Panc1 (cell line): ENCODE measurements at regions of chrX and their contacts with region 1.

Region 1: DNA sequence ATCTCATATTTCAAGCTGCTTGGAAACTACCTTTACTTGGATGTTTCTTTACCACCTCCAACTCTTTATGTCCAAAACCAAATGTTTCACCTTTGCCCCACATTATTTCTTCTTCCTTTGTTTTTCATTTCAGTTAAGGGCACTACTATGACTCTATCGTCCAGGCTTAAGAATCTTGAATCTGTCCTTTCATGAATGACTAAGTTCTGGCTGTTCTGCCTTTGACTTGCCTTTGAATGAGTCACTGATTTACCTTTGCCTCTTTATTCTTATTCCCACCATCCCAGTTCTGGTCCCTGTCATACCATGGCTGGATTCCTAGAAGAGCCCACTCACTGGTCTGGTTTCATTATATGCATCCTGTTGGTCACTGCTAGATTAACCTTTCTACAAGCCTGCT is 30.6 kb upstream of the PLAC1 start:
- DNase-seq: no peak
- ATAC-seq: no peak
- H3K4me3 ChIP-seq: no peak overlapping the region
- H3K27ac ChIP-seq: no peak overlapping the region
- H3K4me1 ChIP-seq: no peaks in the 10 kb centered on the region
- H3K27me3 ChIP-seq: no peaks in the 10 kb centered on the region
- CTCF ChIP-seq: no peak

Region 2: GRCh38 chrX:134396174-134396573 is 292.7 kb before region 1 on chrX:
- CTCF ChIA-PET with region 1: no interaction called
- POLR2A ChIA-PET with region 1: no interaction called
- in situ Hi-C with region 1: no loop called
- intact Hi-C with region 1: no loop called
- DNase-seq: no peak
- ATAC-seq: no peak
- H3K4me3 ChIP-seq: no peak overlapping the region
- H3K27ac ChIP-seq: no peak overlapping the region
- H3K4me1 ChIP-seq: no peaks in the 10 kb centered on the region
- H3K27me3 ChIP-seq: no peaks in the 10 kb centered on the region
- CTCF ChIP-seq: peak; percentile 77; the same call in 1 of the 2 replicates

Region 3: DNA sequence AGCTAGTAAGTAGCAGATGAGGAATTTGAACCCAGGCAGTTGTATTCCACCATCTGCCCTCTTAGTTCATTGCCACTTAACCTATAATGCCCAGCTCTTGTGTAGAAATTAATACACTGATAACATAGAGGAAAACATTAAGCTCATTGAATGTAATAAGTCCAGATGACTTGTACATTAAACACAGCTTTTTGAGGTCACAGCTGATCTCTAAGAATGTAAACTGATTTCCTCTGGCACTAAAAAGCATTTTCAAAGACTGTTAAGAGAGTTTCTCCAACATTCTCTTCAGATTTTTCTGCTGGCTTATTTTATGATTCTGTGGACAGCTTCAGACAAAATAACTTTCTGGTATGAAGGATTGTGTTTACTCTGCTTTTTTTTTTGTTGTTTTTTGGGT is 186.2 kb before region 1 on chrX:
- CTCF ChIA-PET with region 1: no interaction called
- POLR2A ChIA-PET with region 1: interaction called, 11 read pairs
- in situ Hi-C with region 1: no loop called
- intact Hi-C with region 1: no loop called
- DNase-seq: no peak
- ATAC-seq: no peak
- H3K4me3 ChIP-seq: no peak overlapping the region
- H3K27ac ChIP-seq: no peak overlapping the region
- H3K4me1 ChIP-seq: no peaks in the 10 kb centered on the region
- H3K27me3 ChIP-seq: no peaks in the 10 kb centered on the region
- CTCF ChIP-seq: no peak

Region 4: GRCh38 chrX:134631426-134632346 is 57.2 kb before region 1 on chrX:
- CTCF ChIA-PET with region 1: no interaction called
- POLR2A ChIA-PET with region 1: interaction called, 15 read pairs
- in situ Hi-C with region 1: no loop called
- intact Hi-C with region 1: no loop called
- DNase-seq: no peak
- ATAC-seq: no peak
- H3K4me3 ChIP-seq: no peak overlapping the region
- H3K27ac ChIP-seq: no peak overlapping the region
- H3K4me1 ChIP-seq: no peaks in the 10 kb centered on the region
- H3K27me3 ChIP-seq: no peaks in the 10 kb centered on the region
- CTCF ChIP-seq: no peak

Region 5: DNA sequence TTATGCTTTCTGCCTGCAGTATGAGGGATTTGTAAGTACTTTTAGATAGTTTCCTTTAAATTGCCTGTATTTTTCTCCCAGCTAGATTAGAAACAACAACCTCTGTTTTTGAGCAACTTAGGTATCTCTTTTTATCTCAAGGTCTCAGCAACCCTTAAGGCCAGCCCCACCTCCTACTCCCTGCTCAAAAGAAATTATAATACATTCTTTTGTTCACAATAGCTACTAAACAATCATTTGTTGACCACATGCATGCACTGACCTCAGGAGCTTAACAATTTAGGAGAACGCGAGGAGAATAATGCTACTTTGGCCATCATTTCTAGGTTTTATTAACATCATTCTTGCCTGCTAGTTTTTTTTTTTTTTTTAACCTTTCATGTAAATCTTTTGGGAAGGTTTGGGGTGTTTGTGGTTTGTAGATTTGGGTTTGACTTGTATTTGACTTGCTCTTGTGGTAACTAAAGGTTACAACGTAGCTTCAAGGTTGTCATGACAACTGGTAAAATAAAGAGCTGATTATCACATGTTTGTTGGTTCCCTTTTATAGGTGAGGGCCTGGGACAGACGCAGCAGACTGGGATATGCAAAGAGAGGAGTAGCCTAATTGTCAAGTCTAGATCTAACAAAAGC is 114.8 kb after region 1 on chrX:
- CTCF ChIA-PET with region 1: no interaction called
- POLR2A ChIA-PET with region 1: no interaction called
- in situ Hi-C with region 1: no loop called
- intact Hi-C with region 1: no loop called
- DNase-seq: no peak
- ATAC-seq: no peak
- H3K4me3 ChIP-seq: no peak overlapping the region
- H3K27ac ChIP-seq: peak overlapping the region; percentile 26; the same call in 1 of the 2 replicates
- H3K4me1 ChIP-seq: peaks cover 32% of the 10 kb centered on the region
- H3K27me3 ChIP-seq: no peaks in the 10 kb centered on the region
- CTCF ChIP-seq: no peak

Region 6: DNA sequence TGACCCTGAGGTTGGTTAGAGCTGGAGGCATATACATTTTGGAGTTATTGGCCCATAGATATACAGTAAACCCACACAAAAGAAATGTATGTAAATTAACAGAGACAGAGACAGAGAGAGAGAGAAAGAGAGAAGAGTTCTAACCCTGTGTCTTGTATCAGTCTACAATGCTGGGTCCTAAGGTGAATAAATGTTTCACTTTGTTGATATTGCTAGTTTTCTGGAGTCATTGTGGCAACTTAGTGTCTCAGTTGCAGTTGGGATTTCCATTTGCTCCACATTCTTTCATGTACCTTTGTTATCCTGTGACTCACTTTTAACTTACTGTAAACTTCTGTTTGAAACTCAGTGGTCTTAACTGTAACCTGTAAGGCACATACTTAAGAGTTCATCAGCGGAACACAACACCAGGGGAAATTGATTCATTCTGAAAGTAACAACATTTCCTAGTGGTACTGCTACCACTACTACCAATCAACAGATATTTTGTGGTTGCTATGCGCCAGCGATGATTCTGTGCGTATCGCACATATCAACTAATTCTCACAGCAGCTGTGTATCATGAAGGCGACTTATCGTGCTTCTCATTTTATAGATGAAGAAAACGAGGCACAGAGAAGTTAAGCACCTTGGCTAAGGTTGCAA is 524.5 kb after region 1 on chrX:
- CTCF ChIA-PET with region 1: no interaction called
- POLR2A ChIA-PET with region 1: no interaction called
- in situ Hi-C with region 1: no loop called
- intact Hi-C with region 1: no loop called
- DNase-seq: no peak
- ATAC-seq: no peak
- H3K4me3 ChIP-seq: no peak overlapping the region
- H3K27ac ChIP-seq: no peak overlapping the region
- H3K4me1 ChIP-seq: no peaks in the 10 kb centered on the region
- H3K27me3 ChIP-seq: peaks cover 3% of the 10 kb centered on the region
- CTCF ChIP-seq: no peak